ENCODE measurements at regions of chr17 and their contacts with region 1.

Region 1: GRCh38 chr17:74089869-74090464 is 113.5 kb upstream of the RPL38 start:
- DNase-seq: peak; percentile 61 to 93
- H3K4me3 ChIP-seq: no peak overlapping the region
- H3K27ac ChIP-seq: no peak overlapping the region
- H3K4me1 ChIP-seq: no peaks in the 10 kb centered on the region
- H3K27me3 ChIP-seq: no peaks in the 10 kb centered on the region
- CTCF ChIP-seq: peak; percentile 91 to 99 (median 97)
- EP300 ChIP-seq: no peak
- POLR2A ChIP-seq: no peak
- RAD21 ChIP-seq: peak; percentile 87 to 93

Region 2: DNA sequence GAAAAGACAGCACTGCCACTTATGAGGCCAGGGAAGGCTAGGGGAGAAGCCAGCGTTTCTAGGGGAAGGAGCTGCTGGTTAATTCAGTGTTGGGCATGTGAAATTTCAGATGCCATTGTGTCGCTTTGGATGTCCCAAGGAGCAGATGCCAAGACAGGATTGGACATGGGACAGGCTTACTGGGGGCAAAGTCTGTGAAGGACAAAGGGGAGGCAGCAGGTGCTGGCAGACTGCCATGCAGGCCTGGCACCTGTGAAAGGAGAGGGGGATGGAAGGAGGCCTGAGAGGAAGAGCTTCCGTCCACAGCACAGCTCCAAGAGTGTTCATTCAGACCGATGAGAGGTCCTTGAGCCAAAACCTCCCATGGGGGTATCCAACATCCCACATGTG is 142.0 kb before region 1 on chr17:
- CTCF ChIA-PET with region 1: no interaction called
- POLR2A ChIA-PET with region 1: no interaction called
- DNase-seq: no peak
- H3K4me3 ChIP-seq: no peak overlapping the region
- H3K27ac ChIP-seq: no peak overlapping the region
- H3K4me1 ChIP-seq: peaks cover 0 to 7% (median 1%) of the 10 kb centered on the region in 4 experiments; a peak in 5 of 7 replicates
- H3K27me3 ChIP-seq: peaks cover 1 to 23% (median 20%) of the 10 kb centered on the region in 4 experiments
- CTCF ChIP-seq: no peak
- EP300 ChIP-seq: no peak
- POLR2A ChIP-seq: no peak
- RAD21 ChIP-seq: no peak

Region 3: GRCh38 chr17:74042744-74043486 is 47.1 kb before region 1 on chr17:
- CTCF ChIA-PET with region 1: interaction called, 13 read pairs
- POLR2A ChIA-PET with region 1: no interaction called
- DNase-seq: no peak
- H3K4me3 ChIP-seq: no peak overlapping the region
- H3K27ac ChIP-seq: no peak overlapping the region
- H3K4me1 ChIP-seq: no peaks in the 10 kb centered on the region
- H3K27me3 ChIP-seq: no peaks in the 10 kb centered on the region
- CTCF ChIP-seq: no peak
- EP300 ChIP-seq: no peak
- POLR2A ChIP-seq: no peak
- RAD21 ChIP-seq: no peak

Region 4: GRCh38 chr17:74070374-74070773 is 19.6 kb before region 1 on chr17:
- CTCF ChIA-PET with region 1: interaction called, 84 read pairs
- POLR2A ChIA-PET with region 1: interaction called, 5 read pairs
- DNase-seq: no peak
- H3K4me3 ChIP-seq: no peak overlapping the region
- H3K27ac ChIP-seq: no peak overlapping the region
- H3K4me1 ChIP-seq: no peaks in the 10 kb centered on the region
- H3K27me3 ChIP-seq: no peaks in the 10 kb centered on the region
- CTCF ChIP-seq: peak in 2 of 3 experiments; percentile 25 to 49; a peak in 2 of 4 replicates
- EP300 ChIP-seq: no peak
- POLR2A ChIP-seq: no peak
- RAD21 ChIP-seq: peak; percentile 39 to 61

Region 5: DNA sequence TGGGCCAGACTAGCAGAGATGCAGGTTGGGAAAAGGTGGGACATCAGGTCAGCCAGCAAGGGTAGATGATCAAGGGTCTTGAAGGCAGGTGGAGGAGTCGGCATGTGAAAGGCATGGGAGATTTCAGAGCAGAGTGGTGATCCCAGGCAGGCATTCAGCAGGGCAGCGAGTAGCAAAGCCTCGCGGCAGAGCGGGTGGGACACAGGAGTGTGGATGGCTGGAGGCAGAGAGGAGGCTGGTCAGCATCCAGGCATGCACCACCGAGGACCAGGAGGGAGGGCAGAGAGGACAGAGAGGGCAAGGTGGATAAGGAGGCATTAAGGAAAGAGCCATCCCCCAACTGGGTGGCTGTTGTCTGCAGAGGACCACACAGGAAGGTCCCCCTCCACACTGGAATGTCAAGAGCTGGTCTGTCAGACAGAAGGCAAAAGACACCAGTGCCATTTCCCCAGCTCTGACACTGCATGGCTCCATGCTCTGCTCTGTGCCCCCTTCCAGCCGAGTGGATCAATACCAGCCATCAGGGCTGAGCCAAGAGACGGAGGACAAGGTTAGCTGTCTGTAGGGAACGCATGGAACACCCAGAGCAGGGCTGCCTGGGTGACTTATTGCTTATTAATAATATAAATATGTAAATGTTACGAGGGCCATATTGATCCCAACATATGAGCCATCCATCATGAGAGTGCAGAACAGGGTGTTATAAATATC is 38.7 kb after region 1 on chr17:
- CTCF ChIA-PET with region 1: interaction called, 13 read pairs
- POLR2A ChIA-PET with region 1: no interaction called
- DNase-seq: no peak
- H3K4me3 ChIP-seq: no peak overlapping the region
- H3K27ac ChIP-seq: no peak overlapping the region
- H3K4me1 ChIP-seq: peaks cover 0 to 1% (median 0%) of the 10 kb centered on the region in 4 experiments; a peak in 2 of 7 replicates
- H3K27me3 ChIP-seq: no peaks in the 10 kb centered on the region
- CTCF ChIP-seq: no peak
- EP300 ChIP-seq: no peak
- POLR2A ChIP-seq: no peak
- RAD21 ChIP-seq: no peak

Region 6: DNA sequence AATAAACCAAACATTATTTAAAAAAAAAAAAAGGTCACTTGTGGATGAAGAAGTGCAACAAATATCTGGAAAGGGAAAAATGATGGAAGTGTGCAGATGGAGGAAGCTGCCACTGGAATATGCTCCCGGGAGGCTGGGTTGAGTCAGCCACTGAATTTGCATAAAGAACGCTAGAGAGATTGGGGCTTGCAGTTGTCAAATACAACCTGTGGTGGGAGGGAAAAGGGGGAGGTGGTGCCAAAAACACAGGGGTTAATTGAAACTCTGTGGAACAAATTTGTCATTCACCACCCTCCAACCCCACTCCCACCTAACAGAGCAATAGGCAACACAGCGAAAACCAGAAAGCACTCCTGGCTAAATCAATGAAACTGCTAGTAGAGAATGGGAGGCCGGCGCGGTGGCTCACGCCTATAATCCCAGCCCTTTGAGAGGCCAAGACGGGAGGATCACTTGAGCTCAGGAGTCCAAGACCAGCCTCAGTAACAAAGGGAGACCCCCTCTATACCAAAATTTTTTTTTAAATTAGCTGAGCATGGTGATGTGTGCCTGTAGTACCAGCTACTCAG is 75.9 kb after region 1 on chr17:
- CTCF ChIA-PET with region 1: interaction called, 14 read pairs
- POLR2A ChIA-PET with region 1: no interaction called
- DNase-seq: no peak
- H3K4me3 ChIP-seq: no peak overlapping the region
- H3K27ac ChIP-seq: no peak overlapping the region
- H3K4me1 ChIP-seq: no peaks in the 10 kb centered on the region; a peak in 3 of 7 replicates
- H3K27me3 ChIP-seq: no peaks in the 10 kb centered on the region
- CTCF ChIP-seq: no peak
- EP300 ChIP-seq: no peak
- POLR2A ChIP-seq: no peak
- RAD21 ChIP-seq: no peak

Region 7: GRCh38 chr17:74182041-74182723 is 92.2 kb after region 1 on chr17:
- CTCF ChIA-PET with region 1: interaction called, 94 read pairs
- POLR2A ChIA-PET with region 1: no interaction called
- DNase-seq: no peak
- H3K4me3 ChIP-seq: no peak overlapping the region
- H3K27ac ChIP-seq: no peak overlapping the region
- H3K4me1 ChIP-seq: 0 out of 7 replicates have a peak, but pooled peaks cover 0 to 4% (median 0%) of the 10 kb centered on the region in 4 experiments
- H3K27me3 ChIP-seq: no peaks in the 10 kb centered on the region
- CTCF ChIP-seq: no peak
- EP300 ChIP-seq: no peak
- POLR2A ChIP-seq: no peak
- RAD21 ChIP-seq: no peak

Region 8: DNA sequence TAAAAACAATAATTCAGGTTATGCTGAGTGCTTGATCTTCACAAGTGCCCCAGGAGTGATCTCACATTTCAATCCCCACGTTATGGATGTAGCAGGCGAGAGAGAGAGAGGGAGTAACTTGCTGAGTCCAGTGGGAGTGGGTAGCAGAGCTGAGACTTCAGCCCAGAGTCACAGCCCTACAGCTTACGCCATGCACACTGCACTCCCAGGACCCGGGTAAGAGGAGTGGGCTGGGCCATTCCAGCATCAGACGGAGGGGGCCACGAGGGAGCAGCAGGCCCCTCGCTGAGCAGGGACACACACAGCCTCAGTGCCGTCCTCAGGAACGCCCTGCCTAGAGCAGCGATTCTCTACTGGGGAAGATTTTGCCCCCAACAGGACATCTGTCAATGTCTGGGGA is 226.3 kb after region 1 on chr17:
- CTCF ChIA-PET with region 1: no interaction called
- POLR2A ChIA-PET with region 1: no interaction called
- DNase-seq: no peak
- H3K4me3 ChIP-seq: no peak overlapping the region
- H3K27ac ChIP-seq: no peak overlapping the region
- H3K4me1 ChIP-seq: no peaks in the 10 kb centered on the region
- H3K27me3 ChIP-seq: no peaks in the 10 kb centered on the region; a peak in 1 of 7 replicates
- CTCF ChIP-seq: no peak
- EP300 ChIP-seq: no peak
- POLR2A ChIP-seq: no peak
- RAD21 ChIP-seq: no peak